ENCODE measurements at regions of chr3 and their contacts with region 1.

Region 1: DNA sequence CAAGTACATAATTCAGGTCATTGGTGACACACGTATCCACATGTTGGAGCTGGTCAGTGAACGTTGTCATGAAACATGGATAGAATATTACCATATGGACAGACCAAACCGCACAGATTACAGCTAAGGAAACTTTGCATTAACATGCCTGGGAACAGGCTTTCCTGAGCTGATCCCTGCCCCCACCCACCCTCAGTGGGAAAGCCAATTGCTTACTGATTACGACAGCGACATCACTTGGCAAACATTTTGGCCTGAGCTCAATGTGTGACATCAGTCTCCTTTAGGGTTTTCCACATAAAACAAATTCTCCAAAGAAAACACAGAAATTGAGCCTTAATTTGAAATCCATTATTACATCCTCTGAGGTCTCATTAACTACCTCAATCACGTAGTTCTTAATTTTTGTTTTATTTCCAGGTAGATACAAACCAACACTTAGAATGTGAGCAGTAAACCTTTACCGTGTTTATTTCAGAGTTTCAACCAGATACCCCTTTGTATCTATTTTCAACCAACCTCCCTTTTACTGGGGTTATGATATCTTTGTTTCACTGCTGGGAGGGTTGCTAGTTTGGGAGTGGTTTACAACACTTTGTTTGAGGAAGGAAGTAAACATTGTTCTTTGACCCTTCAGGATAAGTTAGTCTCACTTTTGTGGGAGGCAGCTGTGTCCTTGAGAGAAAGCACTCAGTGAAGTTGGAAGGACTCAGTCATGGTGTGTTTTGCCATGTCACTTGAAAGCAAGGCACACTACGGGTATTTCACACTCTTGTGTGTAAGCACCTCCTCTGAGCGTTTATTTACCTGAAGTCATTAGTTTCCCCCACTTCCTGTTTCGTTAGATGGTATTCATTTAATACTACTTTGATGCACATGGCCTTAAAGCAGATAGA is 103.1 kb downstream of the CMSS1 start:
- DNase-seq: peak; percentile 79
- H3K4me3 ChIP-seq: no peak overlapping the region
- H3K27ac ChIP-seq: peak overlapping the region; percentile 88
- H3K4me1 ChIP-seq: peaks cover 56% of the 10 kb centered on the region
- H3K27me3 ChIP-seq: no peaks in the 10 kb centered on the region
- CTCF ChIP-seq: no peak

Region 2: DNA sequence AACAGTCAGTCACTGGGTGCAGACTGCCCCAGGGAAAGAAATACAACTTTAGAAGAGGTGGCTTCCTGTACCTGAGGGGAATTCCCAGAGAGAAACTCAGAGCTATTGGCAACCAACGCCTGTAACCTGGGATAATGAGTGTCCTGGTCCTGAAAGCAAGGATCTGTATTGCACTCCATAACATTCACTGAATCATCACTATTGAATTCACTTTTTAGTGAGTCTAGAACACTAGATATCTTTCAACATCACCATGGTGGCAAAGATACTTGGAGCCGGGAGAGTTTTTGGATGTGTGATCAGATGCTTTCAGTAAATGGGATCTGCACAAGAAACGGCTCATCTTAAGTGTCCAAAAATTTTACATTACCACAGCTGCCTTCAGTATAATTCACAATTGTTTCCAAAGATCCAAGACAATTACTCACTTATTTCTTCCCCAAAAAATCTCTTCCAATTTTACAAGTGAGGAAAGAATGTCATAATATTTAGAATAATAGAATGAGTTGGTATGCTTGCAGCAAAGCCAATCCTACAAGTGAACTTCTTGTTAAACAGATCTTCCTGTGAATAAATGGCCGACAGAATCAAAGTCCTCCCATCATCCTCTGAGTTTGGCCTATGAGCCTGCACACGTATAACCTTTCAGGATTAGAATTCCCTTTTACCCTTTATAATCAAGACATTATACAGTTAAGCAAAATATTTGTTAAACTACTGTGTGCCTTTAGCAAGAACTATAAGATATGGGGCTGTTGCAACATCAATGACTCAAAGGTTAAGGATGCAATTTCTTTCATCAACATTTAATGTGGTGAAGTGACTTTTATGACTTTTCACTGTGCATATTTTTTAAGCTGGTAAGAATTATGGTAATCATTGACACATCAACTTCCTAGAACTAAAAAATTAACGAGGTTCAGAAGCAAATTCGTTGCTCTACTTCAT is 525.6 kb before region 1 on chr3:
- intact Hi-C with region 1: no loop called
- DNase-seq: no peak
- H3K4me3 ChIP-seq: no peak overlapping the region
- H3K27ac ChIP-seq: no peak overlapping the region
- H3K4me1 ChIP-seq: no peaks in the 10 kb centered on the region
- H3K27me3 ChIP-seq: no peaks in the 10 kb centered on the region
- CTCF ChIP-seq: no peak

Region 3: DNA sequence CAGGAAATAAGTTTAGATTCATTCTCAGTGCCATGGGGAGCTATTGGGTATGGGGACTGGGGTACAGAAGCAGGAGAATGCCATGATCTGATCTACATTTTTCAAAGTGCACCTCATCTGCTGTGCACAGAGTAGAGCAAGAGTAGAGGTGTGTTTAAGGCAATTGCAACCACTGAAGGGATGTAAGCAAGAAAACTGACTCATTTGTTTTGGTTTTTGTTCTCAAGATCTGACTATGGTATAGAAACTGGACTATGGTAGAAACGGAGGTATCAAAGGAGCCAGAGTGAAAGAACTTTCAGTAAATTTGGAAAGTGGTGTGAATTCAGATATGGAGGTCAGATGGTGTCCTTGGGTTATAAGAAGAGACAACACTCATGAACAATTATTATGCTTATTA is 189.2 kb before region 1 on chr3:
- intact Hi-C with region 1: no loop called
- DNase-seq: no peak
- H3K4me3 ChIP-seq: no peak overlapping the region
- H3K27ac ChIP-seq: no peak overlapping the region
- H3K4me1 ChIP-seq: no peaks in the 10 kb centered on the region
- H3K27me3 ChIP-seq: no peaks in the 10 kb centered on the region
- CTCF ChIP-seq: no peak

Region 4: GRCh38 chr3:99875929-99876841 is 44.5 kb before region 1 on chr3:
- intact Hi-C with region 1: loop called (anchors 10 kb)
- DNase-seq: peak; percentile 85
- H3K4me3 ChIP-seq: peak overlapping the region; percentile 80
- H3K27ac ChIP-seq: peak overlapping the region; percentile 91
- H3K4me1 ChIP-seq: peaks cover 71% of the 10 kb centered on the region
- H3K27me3 ChIP-seq: no peaks in the 10 kb centered on the region
- CTCF ChIP-seq: peak; percentile 20

Region 5: GRCh38 chr3:100080573-100080972 is 159.8 kb after region 1 on chr3:
- intact Hi-C with region 1: no loop called
- DNase-seq: no peak
- H3K4me3 ChIP-seq: no peak overlapping the region
- H3K27ac ChIP-seq: no peak overlapping the region
- H3K4me1 ChIP-seq: peaks cover 26% of the 10 kb centered on the region
- H3K27me3 ChIP-seq: no peaks in the 10 kb centered on the region
- CTCF ChIP-seq: no peak

Measured in left ventricle myocardium inferior (tissue), 1 donor.